ENCODE measurements at regions of chr9 and their contacts with region 1.

Region 1: GRCh38 chr9:10071579-10071978 is 541.2 kb downstream of the PTPRD start:
- DNase-seq: no peak
- H3K4me3 ChIP-seq: no peak overlapping the region
- H3K27ac ChIP-seq: no peak overlapping the region
- H3K4me1 ChIP-seq: no peaks in the 10 kb centered on the region
- H3K27me3 ChIP-seq: no peaks in the 10 kb centered on the region
- CTCF ChIP-seq: no peak
- EP300 ChIP-seq: no peak
- RAD21 ChIP-seq: no peak

Region 2: GRCh38 chr9:10059044-10059443 is 12.5 kb before region 1 on chr9:
- CTCF ChIA-PET with region 1: interaction called, 23 read pairs
- POLR2A ChIA-PET with region 1: no interaction called
- DNase-seq: no peak
- H3K4me3 ChIP-seq: no peak overlapping the region
- H3K27ac ChIP-seq: no peak overlapping the region
- H3K4me1 ChIP-seq: 0 out of 4 replicates have a peak, but pooled peaks cover 0 to 4% of the 10 kb centered on the region in 2 experiments
- H3K27me3 ChIP-seq: no peaks in the 10 kb centered on the region
- CTCF ChIP-seq: no peak
- EP300 ChIP-seq: no peak
- RAD21 ChIP-seq: no peak

Region 3: GRCh38 chr9:10232352-10232930 is 160.9 kb after region 1 on chr9:
- CTCF ChIA-PET with region 1: no interaction called
- POLR2A ChIA-PET with region 1: no interaction called
- DNase-seq: no peak
- H3K4me3 ChIP-seq: no peak overlapping the region
- H3K27ac ChIP-seq: no peak overlapping the region
- H3K4me1 ChIP-seq: no peaks in the 10 kb centered on the region
- H3K27me3 ChIP-seq: no peaks in the 10 kb centered on the region
- CTCF ChIP-seq: peak; percentile 55
- EP300 ChIP-seq: no peak
- RAD21 ChIP-seq: no peak

Region 4: GRCh38 chr9:10251490-10251889 is 179.9 kb after region 1 on chr9:
- CTCF ChIA-PET with region 1: no interaction called
- POLR2A ChIA-PET with region 1: no interaction called
- DNase-seq: no peak
- H3K4me3 ChIP-seq: no peak overlapping the region
- H3K27ac ChIP-seq: no peak overlapping the region
- H3K4me1 ChIP-seq: no peaks in the 10 kb centered on the region
- H3K27me3 ChIP-seq: no peaks in the 10 kb centered on the region
- CTCF ChIP-seq: no peak
- EP300 ChIP-seq: no peak
- RAD21 ChIP-seq: no peak

Region 5: GRCh38 chr9:10339152-10339551 is 267.6 kb after region 1 on chr9:
- CTCF ChIA-PET with region 1: no interaction called
- POLR2A ChIA-PET with region 1: no interaction called
- DNase-seq: no peak
- H3K4me3 ChIP-seq: no peak overlapping the region; a peak in 1 of 4 replicates
- H3K27ac ChIP-seq: no peak overlapping the region
- H3K4me1 ChIP-seq: no peaks in the 10 kb centered on the region
- H3K27me3 ChIP-seq: no peaks in the 10 kb centered on the region
- CTCF ChIP-seq: no peak
- EP300 ChIP-seq: no peak
- RAD21 ChIP-seq: no peak

Measured in SK-N-SH (cell line).